H1 (cell line): ENCODE measurements at regions of chr13 and their contacts with region 1.

Region 1: DNA sequence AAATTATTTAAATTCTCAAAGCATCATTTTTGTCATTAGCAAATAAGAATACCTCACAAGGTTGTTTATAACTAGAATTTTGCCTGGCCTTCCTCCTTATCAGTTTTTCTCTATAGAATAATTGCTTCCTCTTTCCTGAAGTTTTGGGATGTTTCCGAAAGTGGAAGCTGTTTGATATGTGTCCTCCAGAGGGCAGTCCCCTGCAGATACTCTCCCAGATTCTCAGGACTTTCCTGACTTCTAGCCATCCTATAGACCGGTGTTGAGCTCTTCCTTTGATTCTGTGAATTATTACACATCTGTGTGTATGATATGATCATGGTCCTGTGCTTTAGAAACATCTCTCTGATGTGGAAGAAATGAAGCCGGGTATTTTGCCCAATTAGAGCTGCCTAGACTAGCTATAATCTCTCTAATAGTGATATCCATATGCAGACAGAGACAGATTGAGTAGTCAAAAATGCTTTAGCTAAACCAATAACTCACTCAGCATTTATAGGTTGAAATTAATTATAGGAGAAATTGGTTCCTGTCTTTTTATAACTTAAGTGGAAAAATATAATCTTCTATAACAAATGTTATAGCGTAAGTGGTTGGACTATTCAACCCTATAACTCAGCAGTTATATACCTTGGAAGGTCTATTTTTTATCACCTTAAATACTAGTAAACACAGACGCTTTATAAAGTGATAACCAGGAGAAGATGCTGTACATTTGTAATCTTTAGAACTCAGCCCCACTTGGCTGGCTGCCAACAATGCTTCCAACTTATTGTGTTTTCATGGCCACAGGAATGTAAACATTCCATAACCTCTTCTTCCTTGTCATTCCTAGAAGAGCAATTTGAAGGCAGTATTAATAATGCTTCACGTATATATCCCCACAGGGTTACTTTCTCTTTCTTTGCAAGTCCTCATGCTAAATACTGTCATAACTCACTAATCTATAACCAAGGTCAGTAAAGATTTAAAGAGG is 201.0 kb upstream of the RXFP2 start:
- DNase-seq: no peak
- H3K4me3 ChIP-seq: no peak overlapping the region
- H3K27ac ChIP-seq: no peak overlapping the region
- H3K4me1 ChIP-seq: no peaks in the 10 kb centered on the region
- H3K27me3 ChIP-seq: no peaks in the 10 kb centered on the region
- CTCF ChIP-seq: peak; percentile 4 to 66 (median 59)
- EP300 ChIP-seq: no peak
- POLR2A ChIP-seq: no peak
- RAD21 ChIP-seq: peak; percentile 75 to 80

Region 2: DNA sequence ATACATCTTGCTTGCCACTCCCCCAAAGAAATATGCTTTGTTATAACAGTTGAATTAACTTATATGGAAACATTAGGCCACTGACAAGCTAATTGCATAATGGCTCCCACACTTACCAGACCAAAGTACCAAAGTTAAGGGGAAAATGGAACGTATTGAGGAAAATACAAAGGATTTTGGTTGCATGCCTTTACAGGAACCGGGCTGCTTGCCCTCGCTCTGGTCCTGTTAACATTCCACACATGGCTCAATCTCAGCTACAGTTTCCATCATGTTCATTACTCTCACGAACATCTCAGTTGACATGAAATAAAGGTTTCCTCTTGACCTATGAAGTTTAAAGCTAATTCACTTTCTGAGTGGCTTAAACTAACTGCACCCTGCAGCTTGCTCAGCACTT is 19.7 kb before region 1 on chr13:
- CTCF ChIA-PET with region 1: interaction called, 15 read pairs
- POLR2A ChIA-PET with region 1: no interaction called
- DNase-seq: no peak
- H3K4me3 ChIP-seq: no peak overlapping the region
- H3K27ac ChIP-seq: no peak overlapping the region
- H3K4me1 ChIP-seq: peaks cover 0 to 2% (median 0%) of the 10 kb centered on the region in 4 experiments; a peak in 1 of 7 replicates
- H3K27me3 ChIP-seq: no peaks in the 10 kb centered on the region
- CTCF ChIP-seq: no peak
- EP300 ChIP-seq: no peak
- POLR2A ChIP-seq: no peak
- RAD21 ChIP-seq: no peak

Region 3: DNA sequence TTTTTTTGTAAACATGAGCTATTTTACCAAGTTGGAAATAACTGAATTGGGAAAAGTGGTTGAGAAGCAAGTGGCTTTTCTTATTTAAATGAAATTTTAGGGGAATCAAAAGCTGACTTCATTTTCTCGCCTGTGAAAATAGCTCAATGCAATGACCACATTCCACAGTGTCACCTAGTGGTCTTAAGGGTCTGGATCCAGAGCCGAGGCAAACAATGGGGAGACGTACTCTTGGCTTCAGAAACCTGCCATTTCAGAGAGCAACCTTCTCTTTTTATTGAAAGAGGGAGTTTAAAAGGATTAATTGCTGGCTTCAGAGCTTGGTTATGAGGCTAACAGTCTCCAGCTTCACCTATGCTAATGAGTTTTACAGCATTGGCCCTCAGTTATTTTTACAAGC is 161.3 kb after region 1 on chr13:
- CTCF ChIA-PET with region 1: interaction called, 13 read pairs
- POLR2A ChIA-PET with region 1: no interaction called
- DNase-seq: no peak
- H3K4me3 ChIP-seq: no peak overlapping the region
- H3K27ac ChIP-seq: no peak overlapping the region
- H3K4me1 ChIP-seq: peaks cover 0 to 7% (median 3%) of the 10 kb centered on the region in 4 experiments; a peak in 3 of 7 replicates
- H3K27me3 ChIP-seq: no peaks in the 10 kb centered on the region
- CTCF ChIP-seq: peak; percentile 40 to 56 (median 40)
- EP300 ChIP-seq: no peak
- POLR2A ChIP-seq: no peak
- RAD21 ChIP-seq: peak; percentile 61 to 77

Region 4: GRCh38 chr13:31733066-31733465 is 194.7 kb after region 1 on chr13:
- CTCF ChIA-PET with region 1: interaction called, 16 read pairs
- POLR2A ChIA-PET with region 1: no interaction called
- DNase-seq: no peak
- H3K4me3 ChIP-seq: no peak overlapping the region
- H3K27ac ChIP-seq: no peak overlapping the region
- H3K4me1 ChIP-seq: no peaks in the 10 kb centered on the region
- H3K27me3 ChIP-seq: no peaks in the 10 kb centered on the region
- CTCF ChIP-seq: no peak
- EP300 ChIP-seq: no peak
- POLR2A ChIP-seq: no peak
- RAD21 ChIP-seq: no peak

Region 5: GRCh38 chr13:31742097-31742734 is 203.9 kb after region 1 on chr13:
- CTCF ChIA-PET with region 1: interaction called, 28 read pairs
- POLR2A ChIA-PET with region 1: no interaction called
- DNase-seq: peak; percentile 36 to 83
- H3K4me3 ChIP-seq: no peak overlapping the region
- H3K27ac ChIP-seq: no peak overlapping the region
- H3K4me1 ChIP-seq: no peaks in the 10 kb centered on the region
- H3K27me3 ChIP-seq: no peaks in the 10 kb centered on the region
- CTCF ChIP-seq: peak; percentile 87 to 91 (median 89)
- EP300 ChIP-seq: no peak
- POLR2A ChIP-seq: no peak
- RAD21 ChIP-seq: peak; percentile 97 to 99